ENCODE measurements at regions of chr11 and their contacts with region 1.

Region 1: GRCh38 chr11:46308631-46309419 is 31.4 kb downstream of the CREB3L1 start:
- DNase-seq: peak; percentile 61
- ATAC-seq: peak; percentile 84
- H3K4me3 ChIP-seq: no peak overlapping the region
- H3K27ac ChIP-seq: no peak overlapping the region
- H3K4me1 ChIP-seq: peaks cover 11% of the 10 kb centered on the region
- H3K27me3 ChIP-seq: no peaks in the 10 kb centered on the region
- CTCF ChIP-seq: peak; percentile 81
- POLR2A ChIP-seq: peak; percentile 37; the same call in 1 of the 2 replicates
- RAD21 ChIP-seq: peak; percentile 89

Region 2: DNA sequence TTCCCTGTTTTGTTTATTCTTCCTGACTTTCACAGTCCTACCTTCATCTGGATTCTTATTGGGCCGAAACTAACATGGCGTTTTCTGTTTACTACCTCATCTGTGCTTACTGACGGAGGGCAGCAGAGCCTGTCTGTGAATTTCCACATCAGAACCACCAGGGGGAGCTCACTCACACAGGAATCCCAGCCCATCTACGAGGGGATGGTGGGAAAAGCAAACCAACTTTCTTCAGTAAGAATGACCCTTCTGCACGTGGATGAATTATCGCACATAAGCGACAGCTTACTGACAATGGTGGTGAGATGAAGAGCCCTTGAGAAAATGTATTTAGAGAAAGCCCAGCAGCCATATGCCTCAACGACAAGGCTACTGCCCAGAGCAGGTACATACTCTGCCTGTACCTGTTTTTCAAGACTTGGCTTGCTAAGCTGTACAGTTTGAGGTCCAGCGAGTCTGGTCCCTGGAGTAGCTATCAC is 343.9 kb before region 1 on chr11:
- CTCF ChIA-PET with region 1: no interaction called
- POLR2A ChIA-PET with region 1: no interaction called
- dilution Hi-C with region 1: no loop called
- in situ Hi-C with region 1: no loop called
- intact Hi-C with region 1: loop called (anchors 5 kb)
- DNase-seq: peak; percentile 80
- ATAC-seq: peak; percentile 99
- H3K4me3 ChIP-seq: no peak overlapping the region
- H3K27ac ChIP-seq: no peak overlapping the region
- H3K4me1 ChIP-seq: peaks cover 2% of the 10 kb centered on the region; the same call in 1 of the 2 replicates
- H3K27me3 ChIP-seq: no peaks in the 10 kb centered on the region
- CTCF ChIP-seq: peak; percentile 90
- POLR2A ChIP-seq: no peak
- RAD21 ChIP-seq: peak; percentile 89

Region 3: GRCh38 chr11:46574656-46575055 is 265.8 kb after region 1 on chr11:
- CTCF ChIA-PET with region 1: no interaction called
- POLR2A ChIA-PET with region 1: no interaction called
- dilution Hi-C with region 1: no loop called
- in situ Hi-C with region 1: no loop called
- intact Hi-C with region 1: no loop called
- DNase-seq: no peak
- ATAC-seq: no peak
- H3K4me3 ChIP-seq: no peak overlapping the region
- H3K27ac ChIP-seq: no peak overlapping the region
- H3K4me1 ChIP-seq: 0 out of 2 replicates have a peak, but pooled peaks cover 2% of the 10 kb centered on the region
- H3K27me3 ChIP-seq: no peaks in the 10 kb centered on the region
- CTCF ChIP-seq: no peak
- POLR2A ChIP-seq: no peak
- RAD21 ChIP-seq: no peak

Region 4: DNA sequence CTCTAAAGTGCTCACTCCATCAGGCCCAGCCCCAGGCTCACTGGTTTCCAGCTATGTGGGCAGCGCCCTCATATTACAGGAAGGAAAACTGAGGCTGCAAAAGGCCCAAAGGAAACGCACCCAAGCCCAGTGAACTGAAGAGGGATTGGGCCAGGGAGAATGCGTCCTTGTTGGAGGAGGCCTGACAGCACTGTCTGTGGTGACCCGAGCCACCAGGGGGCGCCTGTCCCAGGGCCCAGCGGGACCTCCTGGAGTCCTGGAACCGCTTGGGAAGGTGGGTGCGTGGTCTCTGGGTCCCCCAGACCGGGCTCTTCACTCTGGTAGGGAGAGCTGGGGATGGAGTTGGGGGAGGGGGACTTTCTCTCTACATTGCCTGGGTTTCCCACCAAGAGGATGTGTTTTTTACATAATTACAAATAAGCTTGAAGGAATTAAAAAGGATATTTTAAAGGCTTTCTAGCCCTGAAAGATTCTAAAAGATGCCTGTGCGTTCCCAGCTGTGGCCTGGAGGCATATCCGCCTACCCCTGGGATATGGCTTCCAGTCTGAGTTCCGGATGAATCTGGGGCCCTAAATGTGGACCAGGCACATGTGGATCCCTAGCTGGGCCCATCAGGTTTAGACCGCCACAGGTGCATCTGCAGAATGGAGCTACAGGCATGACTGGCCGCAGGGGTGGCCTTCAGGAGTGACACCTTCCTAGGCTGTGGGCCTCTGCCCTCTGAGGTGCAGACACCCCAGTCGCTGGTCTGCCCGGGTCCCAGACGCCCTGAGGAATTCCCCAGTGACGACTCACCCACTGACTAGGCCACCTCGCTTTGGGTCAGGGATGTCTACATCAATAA is 1065.3 kb after region 1 on chr11:
- CTCF ChIA-PET with region 1: no interaction called
- POLR2A ChIA-PET with region 1: no interaction called
- dilution Hi-C with region 1: no loop called
- in situ Hi-C with region 1: no loop called
- intact Hi-C with region 1: no loop called
- DNase-seq: peak; percentile 62
- ATAC-seq: peak; percentile 98
- H3K4me3 ChIP-seq: no peak overlapping the region
- H3K27ac ChIP-seq: no peak overlapping the region
- H3K4me1 ChIP-seq: peaks cover 5% of the 10 kb centered on the region
- H3K27me3 ChIP-seq: peaks cover 4% of the 10 kb centered on the region
- CTCF ChIP-seq: peak; percentile 88
- POLR2A ChIP-seq: no peak
- RAD21 ChIP-seq: peak; percentile 76